Right cardiac atrium (tissue), 5 donors: ENCODE measurements at regions of chr22 and their contacts with region 1.

Region 1: GRCh38 chr22:37965940-37966664 is 12.6 kb downstream of the POLR2F start:
- DNase-seq: peak in 1 of 3 donors; percentile 14
- ATAC-seq: peak in 1 of 2 donors; percentile 27
- H3K4me3 ChIP-seq: no peak overlapping the region
- H3K27ac ChIP-seq: no peak overlapping the region
- H3K4me1 ChIP-seq: peaks cover 3% of the 10 kb centered on the region
- H3K27me3 ChIP-seq: no peaks in the 10 kb centered on the region

Region 2: DNA sequence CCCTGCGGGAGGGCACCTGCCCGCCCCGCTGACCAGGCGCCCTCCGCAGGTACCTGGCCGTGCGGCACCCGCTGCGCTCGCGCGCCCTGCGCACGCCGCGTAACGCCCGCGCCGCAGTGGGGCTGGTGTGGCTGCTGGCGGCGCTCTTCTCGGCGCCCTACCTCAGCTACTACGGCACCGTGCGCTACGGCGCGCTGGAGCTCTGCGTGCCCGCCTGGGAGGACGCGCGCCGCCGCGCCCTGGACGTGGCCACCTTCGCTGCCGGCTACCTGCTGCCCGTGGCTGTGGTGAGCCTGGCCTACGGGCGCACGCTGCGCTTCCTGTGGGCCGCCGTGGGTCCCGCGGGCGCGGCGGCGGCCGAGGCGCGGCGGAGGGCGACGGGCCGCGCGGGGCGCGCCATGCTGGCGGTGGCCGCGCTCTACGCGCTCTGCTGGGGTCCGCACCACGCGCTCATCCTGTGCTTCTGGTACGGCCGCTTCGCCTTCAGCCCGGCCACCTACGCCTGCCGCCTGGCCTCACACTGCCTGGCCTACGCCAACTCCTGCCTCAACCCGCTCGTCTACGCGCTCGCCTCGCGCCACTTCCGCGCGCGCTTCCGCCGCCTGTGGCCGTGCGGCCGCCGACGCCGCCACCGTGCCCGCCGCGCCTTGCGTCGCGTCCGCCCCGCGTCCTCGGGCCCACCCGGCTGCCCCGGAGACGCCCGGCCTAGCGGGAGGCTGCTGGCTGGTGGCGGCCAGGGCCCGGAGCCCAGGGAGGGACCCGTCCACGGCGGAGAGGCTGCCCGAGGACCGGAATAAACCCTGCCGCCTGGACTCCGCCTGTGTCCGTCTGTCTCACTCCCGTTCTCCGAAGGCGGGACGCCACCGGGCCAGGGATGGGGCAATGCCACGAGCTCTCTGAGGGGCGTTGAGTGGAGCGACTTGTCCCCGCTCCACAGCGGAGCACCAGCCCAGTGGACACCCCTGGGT is 141.1 kb before region 1 on chr22:
- intact Hi-C with region 1: loop called in 1 of 4 experiments (anchors 5 kb)
- DNase-seq: peak in 2 of 3 donors; percentile 58 to 64
- ATAC-seq: peak in 1 of 2 donors; percentile 12
- H3K4me3 ChIP-seq: peak overlapping the region; percentile 22
- H3K27ac ChIP-seq: no peak overlapping the region
- H3K4me1 ChIP-seq: no peaks in the 10 kb centered on the region
- H3K27me3 ChIP-seq: no peaks in the 10 kb centered on the region

Region 3: DNA sequence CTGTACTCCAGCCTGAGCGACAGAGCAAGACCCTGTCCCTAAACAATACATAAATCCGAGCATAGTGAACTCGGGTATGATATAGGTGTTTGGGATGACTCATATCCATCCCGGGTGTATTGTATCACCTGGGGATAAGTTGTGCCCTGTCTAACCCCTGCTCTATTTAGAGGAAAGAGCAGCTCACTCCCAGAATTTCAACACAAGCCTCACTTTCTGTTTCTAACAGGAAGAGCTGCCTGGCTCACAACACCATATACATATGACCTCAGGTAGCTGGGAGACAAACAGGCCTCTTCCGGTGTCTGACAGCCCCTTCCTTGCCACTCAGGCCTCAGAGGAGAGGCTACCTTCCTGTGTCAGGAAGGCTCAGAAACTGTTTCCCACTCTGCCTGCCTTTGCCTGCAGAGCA is 69.9 kb before region 1 on chr22:
- intact Hi-C with region 1: no loop called
- DNase-seq: no peak
- ATAC-seq: peak; percentile 11 to 39
- H3K4me3 ChIP-seq: no peak overlapping the region
- H3K27ac ChIP-seq: peak overlapping the region; percentile 47
- H3K4me1 ChIP-seq: peaks cover 21% of the 10 kb centered on the region
- H3K27me3 ChIP-seq: no peaks in the 10 kb centered on the region

Region 4: DNA sequence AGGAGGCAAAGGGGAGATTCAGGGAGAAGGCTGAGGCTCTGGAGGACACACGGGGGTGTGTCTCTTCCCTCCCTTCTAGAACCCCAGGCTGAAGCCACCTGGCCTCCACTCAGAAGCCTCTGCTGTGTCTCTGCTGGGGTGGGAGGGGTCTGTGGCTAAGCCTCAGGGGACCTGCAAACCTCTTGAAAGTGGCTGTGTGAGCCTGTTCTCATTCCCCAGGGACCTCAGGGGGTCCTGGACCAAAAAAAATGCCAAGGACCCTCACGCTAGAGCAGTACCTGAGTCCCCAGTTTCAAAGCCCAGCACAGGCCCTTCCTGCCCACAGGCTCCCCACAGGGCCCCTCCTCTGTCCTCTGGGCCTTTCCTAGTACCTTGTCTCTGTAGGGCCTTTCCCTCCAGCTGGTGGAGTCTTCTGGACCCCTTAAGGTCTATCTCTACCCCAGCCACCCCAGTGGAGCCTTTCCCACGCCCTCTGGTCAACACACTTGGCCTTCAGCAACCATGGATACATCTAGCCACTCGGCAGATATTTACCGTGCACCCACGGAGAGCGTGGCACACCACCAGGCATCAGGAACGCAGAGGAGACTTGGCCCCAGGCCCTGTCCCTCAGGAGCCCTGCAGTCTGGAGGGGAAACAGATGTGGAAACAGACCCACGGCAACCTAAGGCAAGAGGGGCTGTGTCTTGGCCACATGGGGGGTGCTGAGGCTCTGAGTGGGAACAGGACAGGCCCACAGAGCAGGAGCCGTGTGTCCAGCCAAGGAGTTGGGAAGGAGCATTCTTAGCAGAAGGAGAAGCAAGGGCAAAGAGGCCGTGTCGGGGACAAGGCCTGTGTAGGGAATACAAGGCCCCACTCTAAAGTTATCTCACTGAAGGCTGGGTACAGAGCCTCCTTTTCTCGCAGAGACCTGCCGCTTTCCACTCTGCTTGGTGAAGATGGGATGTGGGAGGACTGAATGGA is 197.1 kb after region 1 on chr22:
- intact Hi-C with region 1: no loop called
- DNase-seq: no peak
- ATAC-seq: peak; percentile 4 to 22
- H3K4me3 ChIP-seq: no peak overlapping the region
- H3K27ac ChIP-seq: peak overlapping the region; percentile 71
- H3K4me1 ChIP-seq: peaks cover 14% of the 10 kb centered on the region
- H3K27me3 ChIP-seq: no peaks in the 10 kb centered on the region